ENCODE measurements at regions of chrX and their contacts with region 1.

Region 1: GRCh38 chrX:107716816-107717700 is 58.5 kb downstream of the TSC22D3 start:
- DNase-seq: peak; percentile 97
- H3K4me3 ChIP-seq: peak overlapping the region; percentile 67 to 86 (median 78)
- H3K27ac ChIP-seq: peak overlapping the region; percentile 91 to 98 (median 94)
- H3K4me1 ChIP-seq: peaks cover 0 to 55% (median 27%) of the 10 kb centered on the region in 4 donors
- H3K27me3 ChIP-seq: no peaks in the 10 kb centered on the region
- CTCF ChIP-seq: peak in 1 of 4 experiments; percentile 7
- EP300 ChIP-seq: peak; percentile 41 to 88 (median 80)
- POLR2A ChIP-seq: peak; percentile 93 to 97

Region 2: DNA sequence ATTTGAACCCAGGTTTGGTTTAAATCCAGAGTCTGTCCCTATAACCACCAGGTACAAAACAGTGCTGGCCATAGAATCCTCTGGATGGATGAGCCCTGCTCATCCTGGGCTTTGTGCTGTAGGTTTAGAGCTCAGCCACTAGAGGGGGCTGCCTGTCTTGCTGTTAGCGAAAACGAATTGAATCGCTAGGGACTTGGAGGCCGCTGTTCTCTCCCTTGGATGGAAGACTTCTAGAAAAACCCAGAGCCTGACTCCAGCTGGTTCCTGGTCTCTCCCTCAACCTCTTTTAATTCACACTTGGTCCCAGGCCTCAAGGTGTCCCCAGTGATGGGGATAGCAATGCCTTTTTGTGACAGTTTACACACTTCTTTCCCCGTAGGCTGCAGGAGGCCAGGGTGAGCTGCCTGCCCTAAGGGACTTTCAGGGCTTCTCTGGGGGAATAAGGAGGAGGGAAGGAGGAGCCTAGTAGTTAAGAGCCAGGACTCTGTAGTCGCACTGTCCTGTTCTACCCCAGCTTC is 822.6 kb before region 1 on chrX:
- intact Hi-C with region 1: loop called (anchors 10 kb)
- DNase-seq: peak; percentile 78
- H3K4me3 ChIP-seq: no peak overlapping the region
- H3K27ac ChIP-seq: no peak overlapping the region
- H3K4me1 ChIP-seq: peaks cover 0 to 3% (median 0%) of the 10 kb centered on the region in 4 donors
- H3K27me3 ChIP-seq: no peaks in the 10 kb centered on the region
- CTCF ChIP-seq: peak; percentile 30 to 62 (median 48)
- EP300 ChIP-seq: no peak
- POLR2A ChIP-seq: no peak

Region 3: GRCh38 chrX:107672955-107673378 is 44.1 kb before region 1 on chrX:
- intact Hi-C with region 1: loop called (anchors 2 kb)
- DNase-seq: peak; percentile 93
- H3K4me3 ChIP-seq: peak overlapping the region in 1 of 4 donors; percentile 4
- H3K27ac ChIP-seq: peak overlapping the region; percentile 85 to 91 (median 86)
- H3K4me1 ChIP-seq: peaks cover 0 to 28% (median 7%) of the 10 kb centered on the region in 4 donors
- H3K27me3 ChIP-seq: no peaks in the 10 kb centered on the region
- CTCF ChIP-seq: peak; percentile 52 to 65 (median 60)
- EP300 ChIP-seq: peak in 2 of 4 donors; percentile 30 to 51
- POLR2A ChIP-seq: no peak

Region 4: GRCh38 chrX:107678957-107679740 is 37.9 kb before region 1 on chrX:
- intact Hi-C with region 1: loop called (anchors 2 kb)
- DNase-seq: peak; percentile 93
- H3K4me3 ChIP-seq: no peak overlapping the region
- H3K27ac ChIP-seq: peak overlapping the region; percentile 27 to 91 (median 86)
- H3K4me1 ChIP-seq: peaks cover 0 to 35% (median 25%) of the 10 kb centered on the region in 4 donors
- H3K27me3 ChIP-seq: peaks cover 0 to 4% (median 0%) of the 10 kb centered on the region in 3 donors
- CTCF ChIP-seq: no peak
- EP300 ChIP-seq: no peak
- POLR2A ChIP-seq: no peak

Region 5: DNA sequence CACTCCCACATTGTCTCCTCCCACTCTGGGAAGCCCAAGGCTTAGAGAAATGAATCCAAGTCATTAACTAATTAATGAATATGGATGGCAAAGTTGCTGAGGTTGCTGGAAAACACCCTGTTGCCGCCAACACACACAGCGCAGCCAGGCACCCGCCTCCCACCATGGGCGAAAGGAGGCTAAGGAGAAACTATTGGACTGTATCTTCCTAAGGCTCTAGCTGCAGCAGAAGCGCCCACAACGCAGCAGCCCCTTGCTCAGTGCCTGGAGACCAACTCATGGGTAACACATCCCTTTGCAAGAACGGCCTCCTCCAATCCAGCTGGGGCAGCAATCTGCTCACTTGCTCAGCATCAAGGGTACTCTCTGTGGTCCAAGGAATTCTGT is 24.3 kb after region 1 on chrX:
- intact Hi-C with region 1: loop called (anchors 2 kb)
- DNase-seq: no peak
- H3K4me3 ChIP-seq: peak overlapping the region in 1 of 4 donors; percentile 30
- H3K27ac ChIP-seq: peak overlapping the region; percentile 88 to 93 (median 91)
- H3K4me1 ChIP-seq: peaks cover 0 to 53% (median 47%) of the 10 kb centered on the region in 4 donors
- H3K27me3 ChIP-seq: no peaks in the 10 kb centered on the region
- CTCF ChIP-seq: no peak
- EP300 ChIP-seq: no peak
- POLR2A ChIP-seq: no peak

Region 6: GRCh38 chrX:107776649-107777535 is 59.8 kb after region 1 on chrX:
- intact Hi-C with region 1: loop called (anchors 1 kb)
- DNase-seq: peak; percentile 93
- H3K4me3 ChIP-seq: peak overlapping the region; percentile 44 to 64 (median 54)
- H3K27ac ChIP-seq: peak overlapping the region; percentile 83 to 87 (median 85)
- H3K4me1 ChIP-seq: peaks cover 0 to 17% (median 4%) of the 10 kb centered on the region in 4 donors
- H3K27me3 ChIP-seq: no peaks in the 10 kb centered on the region
- CTCF ChIP-seq: peak; percentile 39 to 75 (median 64)
- EP300 ChIP-seq: no peak
- POLR2A ChIP-seq: no peak

Measured in sigmoid colon (tissue), 7 donors.